Psoas muscle (tissue), 8 donors: ENCODE measurements at regions of chr4 and their contacts with region 1.

Region 1: DNA sequence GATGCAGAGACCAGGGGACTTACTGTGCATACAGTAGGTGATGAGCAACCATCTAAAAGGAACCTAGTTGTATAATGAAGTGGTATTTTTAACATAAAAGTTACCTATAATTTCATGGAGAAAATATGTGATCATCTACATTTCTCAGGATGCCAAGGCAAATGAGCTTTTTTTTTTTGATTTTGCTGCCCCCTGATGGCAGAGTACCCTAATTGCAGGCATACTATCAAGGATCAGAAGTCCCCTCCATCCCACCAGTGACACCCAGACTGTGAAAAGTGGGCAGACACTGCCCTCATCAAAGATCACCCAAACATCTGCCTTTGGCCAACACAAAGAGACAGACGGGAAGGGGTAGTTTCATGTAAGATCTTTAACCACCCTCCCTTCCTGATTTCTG is 9.6 kb upstream of the ABLIM2 start:
- DNase-seq: no peak
- ATAC-seq: no peak
- H3K4me3 ChIP-seq: no peak overlapping the region
- H3K27ac ChIP-seq: peak overlapping the region; percentile 97
- H3K4me1 ChIP-seq: peaks cover 64% of the 10 kb centered on the region
- H3K27me3 ChIP-seq: no peaks in the 10 kb centered on the region
- CTCF ChIP-seq: peak; percentile 59

Region 2: DNA sequence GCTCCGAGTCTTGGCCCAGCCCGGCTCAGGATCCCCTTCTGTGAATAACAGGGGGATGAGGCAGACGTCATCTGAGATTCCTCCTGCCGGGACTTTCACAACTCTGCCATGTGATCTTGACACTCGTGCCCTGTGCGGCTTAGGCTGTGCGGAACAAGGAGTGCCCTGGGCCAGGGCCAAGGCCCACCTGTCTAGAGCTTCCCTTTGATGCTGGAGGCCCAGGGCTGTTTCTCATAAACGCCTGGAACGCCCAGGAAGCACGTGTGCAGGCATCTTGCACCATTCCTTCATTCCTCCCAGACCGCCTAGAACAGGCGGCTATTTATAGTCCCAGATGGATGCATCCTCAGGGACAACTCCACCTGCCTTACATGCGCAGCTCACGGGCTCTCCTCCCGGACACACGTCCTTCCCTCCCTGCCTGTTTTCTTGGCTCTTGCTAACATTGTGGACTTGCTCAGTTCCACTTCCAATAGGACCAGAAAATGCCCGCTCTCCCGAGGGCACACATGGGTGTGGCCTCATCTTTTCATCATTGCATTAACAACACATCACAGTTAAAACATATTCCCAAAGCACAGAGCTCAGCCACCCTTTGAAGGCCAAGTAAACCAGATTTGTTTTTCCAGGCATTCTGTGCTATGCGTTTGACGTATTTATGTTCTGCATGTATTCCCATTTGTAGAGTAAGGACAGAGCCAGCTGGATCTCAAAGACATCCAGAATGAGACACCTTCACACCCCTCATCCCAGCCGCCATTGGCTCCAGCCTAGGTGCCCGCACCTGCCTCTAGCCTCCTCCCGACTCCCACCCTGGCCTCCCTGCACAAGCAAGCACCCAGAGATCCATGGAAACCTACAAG is 66.8 kb before region 1 on chr4:
- intact Hi-C with region 1: loop called in 1 of 2 experiments (anchors 5 kb)
- DNase-seq: peak; percentile 93 to 98
- ATAC-seq: peak; percentile 57 to 82 (median 64)
- H3K4me3 ChIP-seq: no peak overlapping the region
- H3K27ac ChIP-seq: peak overlapping the region; percentile 90
- H3K4me1 ChIP-seq: peaks cover 64% of the 10 kb centered on the region
- H3K27me3 ChIP-seq: no peaks in the 10 kb centered on the region
- CTCF ChIP-seq: no peak

Region 3: GRCh38 chr4:8188743-8189550 is 20.7 kb after region 1 on chr4:
- intact Hi-C with region 1: loop called in 1 of 2 experiments (anchors 2 kb)
- DNase-seq: peak; percentile 83 to 91
- ATAC-seq: peak; percentile 76 to 82 (median 77)
- H3K4me3 ChIP-seq: peak overlapping the region; percentile 19
- H3K27ac ChIP-seq: peak overlapping the region; percentile 90
- H3K4me1 ChIP-seq: peaks cover 39% of the 10 kb centered on the region
- H3K27me3 ChIP-seq: no peaks in the 10 kb centered on the region
- CTCF ChIP-seq: no peak